MCF 10A (cell line): ENCODE measurements at regions of chr12 and their contacts with region 1.

Region 1: GRCh38 chr12:106955377-106956047 is at the start of gene TMEM263:
- DNase-seq: peak; percentile 86
- H3K4me3 Mint-ChIP-seq: peak within 1 kb of the TSS; percentile 95
- H3K27ac Mint-ChIP-seq: peak within 1 kb of the TSS; percentile 95
- H3K4me1 Mint-ChIP-seq: peaks cover 9% of the 10 kb centered on the region
- H3K27me3 Mint-ChIP-seq: no peaks in the 10 kb centered on the region
- CTCF ChIP-seq: no peak
- total RNA-seq, gene TMEM263: 60.1 and 68.4 TPM in 2 replicates

Region 2: DNA sequence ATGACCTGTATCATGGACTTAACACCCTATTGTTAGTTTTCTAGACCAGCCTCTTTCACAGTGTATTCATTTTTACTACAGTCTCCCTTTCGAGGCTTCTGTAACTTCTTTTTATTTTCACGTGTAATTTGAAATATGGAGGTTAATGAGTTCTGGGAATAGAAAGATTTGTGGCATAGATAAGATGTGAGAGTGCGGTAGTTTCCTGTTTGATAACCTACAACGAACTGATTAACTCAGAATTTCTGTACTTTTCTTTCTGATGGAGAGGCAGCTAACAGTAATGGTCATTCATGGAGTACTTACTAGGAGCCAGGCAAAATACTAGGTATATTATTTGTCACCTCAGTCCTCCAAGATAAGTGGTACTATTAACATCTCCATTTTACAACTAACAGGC is 576.7 kb before region 1 on chr12:
- CTCF ChIA-PET with region 1: no interaction called
- POLR2A ChIA-PET with region 1: no interaction called
- intact Hi-C with region 1: no loop called
- DNase-seq: no peak
- H3K4me3 Mint-ChIP-seq: no peak overlapping the region
- H3K27ac Mint-ChIP-seq: no peak overlapping the region
- H3K4me1 Mint-ChIP-seq: no peaks in the 10 kb centered on the region
- H3K27me3 Mint-ChIP-seq: no peaks in the 10 kb centered on the region
- CTCF ChIP-seq: no peak

Region 3: DNA sequence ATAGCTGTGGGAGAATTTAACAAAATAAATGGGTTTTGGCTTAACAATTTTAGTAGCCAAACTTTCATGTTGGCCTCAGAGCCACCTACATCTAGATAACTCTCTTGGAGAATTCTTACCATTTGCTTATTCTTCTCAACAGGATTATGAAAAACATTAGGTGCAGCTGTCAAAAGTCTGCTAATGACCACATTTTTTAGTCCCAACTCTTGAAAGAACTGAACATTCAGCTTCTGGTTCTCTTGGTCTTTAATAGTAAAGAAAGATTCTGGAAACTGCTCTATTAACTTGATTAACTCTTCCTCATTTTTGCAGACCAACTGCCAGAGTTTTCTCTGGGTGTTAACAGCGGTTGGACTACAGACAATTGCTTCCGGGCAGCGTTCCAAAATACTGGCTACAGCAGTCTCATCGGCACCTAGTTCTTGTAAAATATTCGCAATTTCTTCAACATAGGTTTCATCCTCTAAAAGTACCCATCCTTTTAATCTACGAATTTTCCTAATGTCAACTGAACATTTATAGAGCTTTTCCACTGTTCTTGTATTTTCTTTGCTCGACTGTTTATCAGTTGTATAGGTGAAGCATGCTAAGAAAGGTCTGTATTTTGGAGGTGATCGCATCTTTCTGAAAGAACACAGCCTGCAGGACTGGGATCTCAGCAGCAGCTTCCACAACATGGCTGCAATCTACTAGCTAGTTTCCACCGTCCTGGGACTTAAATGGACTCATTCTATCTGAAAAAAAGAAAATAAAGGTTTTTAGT is 22.7 kb after region 1 on chr12:
- CTCF ChIA-PET with region 1: interaction called, 4 read pairs
- POLR2A ChIA-PET with region 1: interaction called, 11 read pairs
- intact Hi-C with region 1: no loop called
- DNase-seq: peak; percentile 47
- H3K4me3 Mint-ChIP-seq: no peak overlapping the region
- H3K27ac Mint-ChIP-seq: no peak overlapping the region
- H3K4me1 Mint-ChIP-seq: peaks cover 20% of the 10 kb centered on the region
- H3K27me3 Mint-ChIP-seq: no peaks in the 10 kb centered on the region
- CTCF ChIP-seq: no peak

Region 4: GRCh38 chr12:107515446-107515958 is 560.0 kb after region 1 on chr12:
- CTCF ChIA-PET with region 1: no interaction called
- POLR2A ChIA-PET with region 1: no interaction called
- intact Hi-C with region 1: loop called (anchors 5 kb)
- DNase-seq: peak; percentile 98
- H3K4me3 Mint-ChIP-seq: peak overlapping the region; percentile 21
- H3K27ac Mint-ChIP-seq: peak overlapping the region; percentile 89
- H3K4me1 Mint-ChIP-seq: peaks cover 26% of the 10 kb centered on the region
- H3K27me3 Mint-ChIP-seq: no peaks in the 10 kb centered on the region
- CTCF ChIP-seq: no peak